ENCODE measurements at regions of chr3 and their contacts with region 1.

Region 1: GRCh38 chr3:58433400-58434169 is at the start of gene PDHB:
- DNase-seq: peak; percentile 97
- H3K4me3 Mint-ChIP-seq: peak within 1 kb of the TSS; percentile 92
- H3K27ac Mint-ChIP-seq: peak within 1 kb of the TSS; percentile 93
- H3K4me1 Mint-ChIP-seq: peaks cover 18% of the 10 kb centered on the region
- H3K27me3 Mint-ChIP-seq: peaks cover 11% of the 10 kb centered on the region
- total RNA-seq, gene PDHB: 68.0 and 69.3 TPM in 2 replicates

Region 2: DNA sequence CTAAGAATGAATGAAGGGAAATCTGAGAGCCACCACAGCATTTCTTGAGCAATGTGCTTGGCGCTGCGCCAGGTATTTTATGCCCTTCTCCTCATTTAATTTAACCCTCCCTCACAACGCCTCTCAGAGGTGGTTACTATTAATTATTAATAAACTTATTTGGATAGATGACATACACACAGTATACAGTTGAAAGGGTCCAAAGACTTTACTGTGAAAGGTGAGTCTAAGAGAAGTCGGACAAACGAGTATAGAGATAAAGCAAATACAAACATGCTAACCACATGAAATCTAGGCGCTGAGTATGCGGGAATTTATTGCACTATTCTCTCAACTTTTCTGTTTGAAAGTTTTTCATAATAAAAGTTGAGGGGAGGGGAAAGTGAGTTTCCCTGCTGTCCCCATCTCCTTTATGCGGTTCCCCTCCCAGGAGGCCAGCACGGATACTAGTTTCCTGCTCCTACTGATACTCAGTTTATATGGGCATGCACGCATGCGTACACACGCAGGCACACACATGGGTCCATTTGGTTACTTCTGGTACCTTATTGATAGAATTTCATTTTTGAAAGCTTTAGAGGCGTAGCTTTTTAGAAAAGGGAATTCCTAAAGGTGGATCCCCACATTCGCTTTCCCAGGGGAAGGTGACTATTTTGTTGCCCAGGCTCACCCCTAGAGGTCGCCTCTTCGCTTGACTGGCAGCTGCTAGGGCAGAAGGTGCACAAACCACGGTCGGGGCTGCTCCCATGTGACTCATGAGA is 29.8 kb after region 1 on chr3:
- intact Hi-C with region 1: loop called (anchors 1 kb)
- DNase-seq: peak; percentile 90
- H3K4me3 Mint-ChIP-seq: no peak overlapping the region
- H3K27ac Mint-ChIP-seq: peak overlapping the region; percentile 65
- H3K4me1 Mint-ChIP-seq: peaks cover 11% of the 10 kb centered on the region
- H3K27me3 Mint-ChIP-seq: peaks cover 6% of the 10 kb centered on the region

Region 3: GRCh38 chr3:58471025-58471887 is 37.7 kb after region 1 on chr3:
- intact Hi-C with region 1: loop called (anchors 2 kb)
- DNase-seq: peak; percentile 88
- H3K4me3 Mint-ChIP-seq: peak overlapping the region; percentile 46
- H3K27ac Mint-ChIP-seq: peak overlapping the region; percentile 62
- H3K4me1 Mint-ChIP-seq: peaks cover 45% of the 10 kb centered on the region
- H3K27me3 Mint-ChIP-seq: peaks cover 2% of the 10 kb centered on the region

Region 4: GRCh38 chr3:58482917-58483636 is 49.5 kb after region 1 on chr3:
- intact Hi-C with region 1: no loop called
- DNase-seq: no peak
- H3K4me3 Mint-ChIP-seq: no peak overlapping the region
- H3K27ac Mint-ChIP-seq: no peak overlapping the region
- H3K4me1 Mint-ChIP-seq: peaks cover 4% of the 10 kb centered on the region
- H3K27me3 Mint-ChIP-seq: peaks cover 64% of the 10 kb centered on the region

Region 5: GRCh38 chr3:58568572-58569286 is 135.1 kb after region 1 on chr3:
- intact Hi-C with region 1: no loop called
- DNase-seq: peak; percentile 91
- H3K4me3 Mint-ChIP-seq: no peak overlapping the region
- H3K27ac Mint-ChIP-seq: no peak overlapping the region
- H3K4me1 Mint-ChIP-seq: peaks cover 4% of the 10 kb centered on the region
- H3K27me3 Mint-ChIP-seq: peaks cover 7% of the 10 kb centered on the region

Measured in activated CD4-positive, alpha-beta T cell treated with anti-CD3 and anti-CD28 coated beads, Interleukin-2, amount 10 ng/mL, durations not matched to agents 24 days and 14 days (primary cell).